Ascending aorta (tissue), 2 donors: ENCODE measurements at regions of chr20 and their contacts with region 1.

Region 1: GRCh38 chr20:4720041-4720976 is 1.4 kb upstream of the PRND start:
- DNase-seq: peak; percentile 18 to 89
- H3K4me3 ChIP-seq: no peak overlapping the region
- H3K27ac ChIP-seq: no peak overlapping the region
- H3K4me1 ChIP-seq: no peaks in the 10 kb centered on the region
- H3K27me3 ChIP-seq: no peaks in the 10 kb centered on the region
- CTCF ChIP-seq: peak; percentile 71 to 83 (median 77)

Region 2: DNA sequence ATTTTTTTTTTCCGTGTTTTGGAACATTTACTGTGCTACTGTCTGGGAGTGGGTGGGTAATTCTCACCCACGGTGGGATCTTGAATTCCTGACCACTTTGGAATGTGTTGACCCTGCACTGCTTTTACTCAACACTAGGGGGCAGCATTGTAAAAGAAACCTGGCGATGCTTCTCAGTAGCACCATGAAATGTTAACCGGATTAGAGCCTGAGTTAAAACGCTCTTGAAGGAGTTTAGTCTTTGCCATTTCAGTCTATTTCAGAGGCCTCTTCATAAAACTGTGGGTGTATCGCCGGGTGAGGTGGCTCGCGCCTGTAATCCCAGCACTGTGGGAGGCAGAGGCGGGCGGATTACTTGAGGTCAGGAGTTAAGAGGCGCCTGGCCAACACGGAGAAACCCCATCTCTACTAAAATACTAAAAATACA is 113.0 kb before region 1 on chr20:
- intact Hi-C with region 1: loop called (anchors 1 kb)
- DNase-seq: peak in 1 of 2 donors; percentile 75
- H3K4me3 ChIP-seq: no peak overlapping the region
- H3K27ac ChIP-seq: no peak overlapping the region
- H3K4me1 ChIP-seq: no peaks in the 10 kb centered on the region
- H3K27me3 ChIP-seq: no peaks in the 10 kb centered on the region
- CTCF ChIP-seq: peak; percentile 88 to 95 (median 90)

Region 3: GRCh38 chr20:4848041-4848440 is 127.7 kb after region 1 on chr20:
- intact Hi-C with region 1: no loop called
- DNase-seq: peak in 1 of 2 donors; percentile 21
- H3K4me3 ChIP-seq: no peak overlapping the region
- H3K27ac ChIP-seq: no peak overlapping the region
- H3K4me1 ChIP-seq: no peaks in the 10 kb centered on the region
- H3K27me3 ChIP-seq: no peaks in the 10 kb centered on the region
- CTCF ChIP-seq: no peak